Adrenal gland (tissue), 19 donors: ENCODE measurements at regions of chr3 and their contacts with region 1.

Region 1: DNA sequence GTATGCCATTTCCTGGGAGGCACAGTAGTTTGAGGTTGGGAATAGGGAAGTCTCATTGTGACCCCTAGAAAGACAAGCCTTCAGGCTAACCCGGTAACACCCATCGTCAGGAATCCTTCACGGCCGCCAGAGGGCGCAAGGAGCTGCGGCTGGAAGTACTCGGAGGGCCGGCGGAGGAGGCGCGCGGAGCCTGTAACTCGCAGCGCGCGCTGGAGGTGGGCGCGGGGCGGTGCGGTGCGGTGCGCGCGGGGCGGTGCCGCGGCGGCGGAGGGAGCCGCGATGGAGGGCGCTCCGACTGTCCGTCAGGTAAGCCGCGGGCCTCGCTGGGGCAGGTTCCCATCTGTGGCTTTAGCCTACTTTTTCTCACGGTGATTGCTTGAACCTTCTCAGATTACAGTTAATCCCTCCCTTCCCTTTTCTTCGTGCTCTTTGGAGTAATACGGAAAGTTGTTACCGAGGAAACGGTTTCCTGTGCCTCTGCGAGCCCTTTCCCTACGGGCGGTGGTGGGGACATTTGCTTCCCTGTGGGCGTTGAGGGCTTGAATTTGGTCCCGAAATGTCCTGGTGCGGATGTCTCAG is at the start of gene GRAMD1C:
- DNase-seq: peak; percentile 79 to 90 (median 87)
- H3K4me3 ChIP-seq: peak within 1 kb of the TSS in 2 of 4 donors; percentile 14 to 66
- H3K27ac ChIP-seq: peak within 1 kb of the TSS in 1 of 5 donors; percentile 52
- H3K4me1 ChIP-seq: peaks cover 0 to 3% of the 10 kb centered on the region in 2 donors
- H3K27me3 ChIP-seq: no peaks in the 10 kb centered on the region
- CTCF ChIP-seq: peak; percentile 52 to 88 (median 73)
- POLR2A ChIP-seq: no peak
- total RNA-seq, gene GRAMD1C: 1.4 to 12.6 (median 4.3) TPM

Region 2: GRCh38 chr3:113736548-113737089 is 102.1 kb before region 1 on chr3:
- intact Hi-C with region 1: loop called in 1 of 2 experiments (anchors 10 kb)
- DNase-seq: peak; percentile 34 to 66 (median 41)
- H3K4me3 ChIP-seq: no peak overlapping the region
- H3K27ac ChIP-seq: peak overlapping the region in 3 of 5 donors; percentile 35 to 72 (median 62)
- H3K4me1 ChIP-seq: peaks cover 0 to 55% of the 10 kb centered on the region in 2 donors
- H3K27me3 ChIP-seq: no peaks in the 10 kb centered on the region
- CTCF ChIP-seq: peak; percentile 48 to 84 (median 78)
- POLR2A ChIP-seq: no peak

Region 3: DNA sequence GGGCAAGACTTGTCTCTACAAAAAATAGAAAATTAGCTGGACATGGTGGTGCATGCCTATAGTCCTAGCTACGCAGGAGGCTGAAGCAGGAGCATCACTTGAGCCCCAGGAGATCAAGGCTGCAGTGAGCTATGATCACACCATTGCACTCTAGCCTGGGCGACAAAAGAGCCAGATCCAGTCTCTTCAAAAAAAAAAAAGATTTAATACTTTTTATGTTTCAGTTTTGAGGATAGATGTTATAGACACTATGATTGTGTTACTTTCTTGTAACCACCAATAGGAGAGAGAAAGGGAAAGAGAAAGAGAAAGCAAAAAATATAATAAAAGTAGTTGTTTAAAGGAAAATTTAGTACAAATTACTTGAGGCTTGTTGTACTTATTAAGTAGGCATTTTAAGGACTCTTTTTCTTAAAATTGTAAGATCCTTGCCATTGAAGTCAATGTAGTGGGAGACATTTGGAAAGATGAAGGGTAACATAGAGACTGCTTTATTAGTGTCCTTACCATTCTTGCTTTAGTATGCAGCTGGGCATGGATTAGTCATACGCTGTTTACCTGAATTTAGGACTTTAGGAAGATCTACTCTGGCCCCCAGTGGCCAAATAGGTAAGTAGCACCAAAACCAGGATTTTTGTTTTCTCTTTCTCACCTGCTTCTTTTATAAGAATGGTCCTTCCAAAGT is 74.0 kb after region 1 on chr3:
- intact Hi-C with region 1: loop called (anchors 2 to 10 kb)
- DNase-seq: peak; percentile 29 to 63 (median 50)
- H3K4me3 ChIP-seq: no peak overlapping the region
- H3K27ac ChIP-seq: no peak overlapping the region
- H3K4me1 ChIP-seq: peaks cover 0 to 5% of the 10 kb centered on the region in 2 donors
- H3K27me3 ChIP-seq: no peaks in the 10 kb centered on the region
- CTCF ChIP-seq: peak; percentile 55 to 78 (median 70)
- POLR2A ChIP-seq: no peak

Region 4: DNA sequence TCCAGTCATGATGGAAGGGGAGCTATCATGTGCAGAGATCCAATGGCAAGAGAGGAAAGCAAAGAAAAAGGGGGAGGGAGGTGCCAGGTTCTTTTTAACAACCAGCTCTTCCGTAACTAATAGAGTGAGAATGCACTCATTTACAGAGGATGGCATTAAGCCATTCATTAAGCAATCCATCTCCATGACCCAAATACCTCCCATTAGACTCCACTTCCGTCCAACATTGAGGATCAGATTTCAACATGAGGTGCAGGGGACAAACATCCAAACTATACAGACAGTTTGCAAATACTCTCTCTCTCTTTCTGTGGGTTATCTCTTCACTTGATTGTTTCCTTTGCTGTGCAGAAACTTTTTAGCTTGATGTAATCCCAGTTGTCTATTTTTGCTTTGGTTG is 130.3 kb after region 1 on chr3:
- intact Hi-C with region 1: no loop called
- DNase-seq: peak in 1 of 7 donors; percentile 4
- H3K4me3 ChIP-seq: no peak overlapping the region
- H3K27ac ChIP-seq: no peak overlapping the region
- H3K4me1 ChIP-seq: no peaks in the 10 kb centered on the region
- H3K27me3 ChIP-seq: no peaks in the 10 kb centered on the region
- CTCF ChIP-seq: no peak
- POLR2A ChIP-seq: no peak